ENCODE measurements at regions of chr22 and their contacts with region 1.

Region 1: DNA sequence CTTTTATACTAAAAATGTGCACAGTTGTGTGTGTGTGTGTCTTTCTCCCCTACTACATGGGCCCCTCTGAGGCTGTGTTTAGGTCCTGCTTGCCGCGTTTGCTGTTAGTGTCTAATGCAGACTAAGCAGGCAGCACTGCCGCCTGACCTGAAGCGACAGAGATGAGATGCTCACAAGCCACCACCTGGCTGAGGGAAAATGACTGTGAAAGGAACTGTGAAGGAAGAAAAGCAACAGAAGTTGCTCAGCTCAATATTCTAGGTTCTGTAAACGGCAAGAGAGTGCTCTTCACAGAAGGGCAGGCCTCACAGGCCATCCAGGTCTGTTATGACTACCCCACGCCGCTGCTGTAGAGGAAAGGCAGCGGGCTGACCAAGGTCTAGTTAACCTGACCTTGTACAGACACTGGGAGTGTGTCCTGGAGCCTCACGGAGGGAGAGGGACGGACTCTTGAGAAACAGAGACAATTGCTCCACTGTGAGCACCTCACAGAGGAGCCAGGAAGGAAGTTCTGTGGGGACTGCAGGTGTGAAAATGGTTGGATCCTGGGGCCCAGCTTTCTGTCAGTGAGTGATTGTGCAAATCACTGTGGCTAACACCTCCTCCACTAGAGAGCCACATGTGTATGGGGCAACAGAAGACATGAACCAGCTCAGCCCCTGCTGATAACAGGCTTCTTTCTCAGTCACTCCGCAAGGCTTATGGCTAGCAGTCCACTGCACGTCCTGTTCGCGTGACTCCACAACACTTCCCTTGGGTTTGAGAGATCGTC is 31.3 kb upstream of the YPEL1 start:
- DNase-seq: no peak
- H3K4me3 ChIP-seq: no peak overlapping the region
- H3K27ac ChIP-seq: no peak overlapping the region
- H3K4me1 ChIP-seq: no peaks in the 10 kb centered on the region
- H3K27me3 ChIP-seq: no peaks in the 10 kb centered on the region
- CTCF ChIP-seq: no peak
- EP300 ChIP-seq: no peak
- POLR2A ChIP-seq: no peak

Region 2: GRCh38 chr22:21567456-21568346 is 199.2 kb before region 1 on chr22 and contains the start of gene UBE2L3:
- intact Hi-C with region 1: no loop called
- DNase-seq: peak; percentile 82 to 88 (median 85)
- H3K4me3 ChIP-seq: peak within 1 kb of the TSS; percentile 53
- H3K27ac ChIP-seq: peak within 1 kb of the TSS; percentile 64 to 92
- H3K4me1 ChIP-seq: peaks cover 10% of the 10 kb centered on the region
- H3K27me3 ChIP-seq: no peaks in the 10 kb centered on the region
- CTCF ChIP-seq: no peak
- EP300 ChIP-seq: no peak
- POLR2A ChIP-seq: peak; percentile 55
- total RNA-seq, gene UBE2L3: 20.3 to 42.0 (median 39.9) TPM

Region 3: GRCh38 chr22:21707677-21708076 is 59.2 kb before region 1 on chr22:
- intact Hi-C with region 1: loop called in 1 of 4 experiments (anchors 10 kb)
- DNase-seq: no peak
- H3K4me3 ChIP-seq: no peak overlapping the region
- H3K27ac ChIP-seq: no peak overlapping the region
- H3K4me1 ChIP-seq: no peaks in the 10 kb centered on the region
- H3K27me3 ChIP-seq: no peaks in the 10 kb centered on the region
- CTCF ChIP-seq: no peak
- EP300 ChIP-seq: no peak
- POLR2A ChIP-seq: no peak

Measured in ovary (tissue), 10 donors.